HEK293 (cell line): ENCODE measurements at regions of chr9 and their contacts with region 1.

Region 1: GRCh38 chr9:130732131-130732530 is 38.6 kb downstream of the EXOSC2 start:
- H3K4me3 ChIP-seq: no peak overlapping the region
- H3K27ac ChIP-seq: no peak overlapping the region
- H3K4me1 ChIP-seq: no peaks in the 10 kb centered on the region
- CTCF ChIP-seq: no peak

Region 2: GRCh38 chr9:130707225-130707976 is 24.7 kb before region 1 on chr9:
- CTCF ChIA-PET with region 1: interaction called, 15 read pairs
- POLR2A ChIA-PET with region 1: interaction called, 3 read pairs
- H3K4me3 ChIP-seq: no peak overlapping the region
- H3K27ac ChIP-seq: no peak overlapping the region
- H3K4me1 ChIP-seq: no peaks in the 10 kb centered on the region
- CTCF ChIP-seq: peak; percentile 79

Region 3: DNA sequence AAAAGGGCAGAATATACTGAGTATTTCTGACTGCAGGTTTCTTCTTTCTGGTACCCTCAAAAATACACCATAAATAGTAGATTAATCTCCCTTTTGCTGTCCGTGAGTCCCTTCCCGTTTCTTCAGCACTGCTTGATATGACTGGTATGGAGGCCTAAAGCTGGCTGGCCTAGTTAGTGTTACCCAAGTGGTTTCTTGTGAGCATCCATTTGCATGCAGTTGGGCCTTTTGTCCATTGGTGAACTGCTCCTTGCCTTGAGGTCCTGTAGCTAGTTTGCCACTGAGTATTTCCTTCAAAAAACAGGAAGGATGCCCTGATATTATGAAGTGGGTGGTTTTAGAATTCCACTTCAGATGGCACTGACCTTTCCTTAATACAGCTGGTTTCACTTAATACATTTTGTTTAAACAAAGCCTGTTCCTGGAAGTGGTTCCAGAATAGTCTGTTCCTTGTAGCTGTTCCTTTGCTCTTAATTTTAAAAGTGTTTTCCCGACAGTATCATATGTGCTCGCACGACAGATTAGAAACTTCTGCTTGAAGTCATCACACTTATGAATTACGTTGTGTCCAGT is 62.9 kb after region 1 on chr9:
- CTCF ChIA-PET with region 1: no interaction called
- POLR2A ChIA-PET with region 1: no interaction called
- H3K4me3 ChIP-seq: no peak overlapping the region
- H3K27ac ChIP-seq: no peak overlapping the region
- H3K4me1 ChIP-seq: no peaks in the 10 kb centered on the region
- CTCF ChIP-seq: no peak